T-cell (primary cell): ENCODE measurements at regions of chr21 and their contacts with region 1.

Region 1: DNA sequence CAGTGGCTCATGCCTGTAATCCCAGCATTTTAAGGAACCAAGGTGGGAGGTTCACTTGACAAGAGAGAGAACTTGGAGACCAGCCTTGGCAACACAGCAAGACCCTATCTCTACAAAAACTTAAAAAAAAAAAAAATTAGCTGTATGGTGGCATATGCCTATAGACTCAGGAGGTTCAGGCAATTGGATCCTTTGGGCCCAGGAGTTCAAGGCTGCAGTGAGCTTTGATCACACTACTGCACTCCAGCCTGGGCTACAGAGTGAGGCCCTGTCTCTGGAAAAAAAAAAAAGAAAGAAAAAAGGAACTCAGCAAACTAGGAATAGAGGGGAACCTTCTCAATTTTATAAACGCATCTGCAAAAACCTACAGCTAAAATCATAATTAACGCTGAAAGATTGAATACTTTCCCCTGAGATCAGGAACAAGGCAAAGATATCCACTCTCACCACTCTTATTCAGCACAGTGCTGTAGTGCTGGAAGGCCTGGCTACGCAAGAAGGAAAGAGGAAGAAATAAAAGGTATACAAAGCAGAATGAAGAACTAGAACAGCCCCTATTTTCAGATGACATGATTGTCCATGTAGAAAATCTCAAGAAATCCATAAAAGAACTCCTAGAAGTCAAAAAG is 21.6 kb downstream of the HSF2BP start:
- DNase-seq: no peak
- ATAC-seq: no peak
- H3K4me3 ChIP-seq: no peak overlapping the region
- H3K4me3 Mint-ChIP-seq: no peak overlapping the region
- H3K27ac ChIP-seq: no peak overlapping the region
- H3K27ac Mint-ChIP-seq: no peak overlapping the region
- H3K4me1 ChIP-seq: no peaks in the 10 kb centered on the region
- H3K4me1 Mint-ChIP-seq: no peaks in the 10 kb centered on the region
- H3K27me3 ChIP-seq: no peaks in the 10 kb centered on the region
- H3K27me3 Mint-ChIP-seq: no peaks in the 10 kb centered on the region

Region 2: DNA sequence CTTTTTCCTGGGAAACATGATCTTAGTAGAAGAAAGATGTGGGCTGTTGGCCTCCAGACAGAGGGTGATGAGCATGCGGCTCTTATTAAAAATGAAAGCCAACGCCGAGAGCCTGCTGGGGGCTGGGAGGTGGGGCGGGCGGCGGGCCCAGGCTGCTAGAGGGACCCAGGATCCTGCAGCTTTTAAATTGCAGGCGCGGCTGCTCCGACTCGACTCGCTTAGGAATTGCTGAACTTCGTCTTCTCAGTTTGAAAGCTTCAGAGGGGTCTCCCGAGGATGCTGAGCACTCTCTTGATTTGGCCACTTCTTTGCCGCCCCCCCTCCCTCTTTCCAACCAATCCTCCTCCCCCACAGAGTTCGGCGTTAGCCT is 228.6 kb after region 1 on chr21:
- CTCF ChIA-PET with region 1: interaction called in 1 of 2 experiments, 10 read pairs
- POLR2A ChIA-PET with region 1: no interaction called
- DNase-seq: peak in 24 of 35 experiments; percentile 13 to 62 (median 26)
- ATAC-seq: peak; percentile 17 to 41 (median 28)
- H3K4me3 ChIP-seq: peak overlapping the region; percentile 57 to 62
- H3K4me3 Mint-ChIP-seq: peak overlapping the region; percentile 78 to 90 (median 83)
- H3K27ac ChIP-seq: peak overlapping the region; percentile 76
- H3K27ac Mint-ChIP-seq: peak overlapping the region; percentile 87
- H3K4me1 ChIP-seq: peaks cover 10 to 34% of the 10 kb centered on the region in 2 experiments
- H3K4me1 Mint-ChIP-seq: peaks cover 44 to 53% (median 46%) of the 10 kb centered on the region in 3 donors
- H3K27me3 ChIP-seq: no peaks in the 10 kb centered on the region
- H3K27me3 Mint-ChIP-seq: no peaks in the 10 kb centered on the region